CD4-positive, alpha-beta memory T cell (primary cell): ENCODE measurements at regions of chr6 and their contacts with region 1.

Region 1: GRCh38 chr6:135880066-135880972 is 28.8 kb downstream of the PDE7B start:
- DNase-seq: peak; percentile 66 to 77 (median 71)
- H3K4me3 ChIP-seq: peak overlapping the region; percentile 34 to 40
- H3K4me3 Mint-ChIP-seq: peak overlapping the region; percentile 77 to 96 (median 85)
- H3K27ac ChIP-seq: peak overlapping the region; percentile 65
- H3K27ac Mint-ChIP-seq: peak overlapping the region; percentile 83 to 98 (median 97)
- H3K4me1 ChIP-seq: peaks cover 35% of the 10 kb centered on the region
- H3K4me1 Mint-ChIP-seq: peaks cover 22 to 46% (median 33%) of the 10 kb centered on the region in 4 donors
- H3K27me3 ChIP-seq: no peaks in the 10 kb centered on the region
- H3K27me3 Mint-ChIP-seq: no peaks in the 10 kb centered on the region

Region 2: DNA sequence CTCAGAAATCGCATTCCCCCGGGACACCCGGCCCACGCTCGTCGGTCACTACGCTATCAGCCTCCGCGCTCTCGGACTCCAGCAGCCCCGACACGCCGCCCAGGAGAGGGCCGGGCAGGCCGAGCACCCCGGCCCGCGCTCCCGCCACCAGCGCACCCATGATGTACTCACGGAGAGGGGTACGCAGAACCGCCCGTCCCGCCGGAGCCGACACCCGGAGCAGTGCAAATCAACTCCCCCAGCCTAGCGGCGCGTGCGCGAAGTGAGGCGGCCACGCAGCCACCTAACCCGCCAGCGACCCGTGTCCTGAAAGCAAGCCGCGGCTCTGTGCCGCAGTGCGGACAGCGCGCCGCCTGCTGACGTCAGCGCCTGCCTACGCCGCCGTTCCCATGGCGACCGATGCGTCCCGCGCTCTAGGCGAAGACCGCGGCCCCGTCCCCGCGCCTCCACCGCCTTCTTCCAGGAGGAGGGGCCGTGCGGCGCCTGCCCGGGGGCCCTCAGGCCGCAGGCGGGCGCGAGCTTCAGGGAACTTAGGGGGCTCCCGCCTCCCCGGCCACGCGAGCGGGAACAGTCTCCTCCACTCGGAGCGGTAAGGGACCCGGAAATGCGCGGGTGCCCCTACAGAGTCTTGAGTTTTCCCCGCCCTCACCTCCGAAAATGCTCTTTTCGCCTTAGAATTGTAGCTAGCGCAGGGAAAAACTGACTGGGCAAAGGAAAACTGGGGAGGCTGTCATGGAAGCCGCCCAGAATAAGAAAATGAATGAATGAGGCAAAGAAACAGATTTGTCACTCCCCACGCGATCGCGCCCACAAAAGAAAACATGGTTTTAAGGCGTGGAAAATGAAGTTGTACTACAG is 382.7 kb before region 1 on chr6 and contains the start of gene AHI1:
- CTCF ChIA-PET with region 1: no interaction called
- POLR2A ChIA-PET with region 1: interaction called, 5 read pairs
- intact Hi-C with region 1: loop called (anchors 2 kb)
- DNase-seq: peak; percentile 86 to 92 (median 89)
- H3K4me3 ChIP-seq: peak within 1 kb of the TSS; percentile 32 to 97
- H3K4me3 Mint-ChIP-seq: peak within 1 kb of the TSS in 3 of 8 donors; percentile 29 to 95 (median 59)
- H3K27ac ChIP-seq: peak within 1 kb of the TSS; percentile 87
- H3K27ac Mint-ChIP-seq: peak within 1 kb of the TSS in 3 of 7 donors; percentile 21 to 69 (median 28)
- H3K4me1 ChIP-seq: peaks cover 15% of the 10 kb centered on the region
- H3K4me1 Mint-ChIP-seq: peaks cover 5 to 9% (median 6%) of the 10 kb centered on the region in 4 donors
- H3K27me3 ChIP-seq: no peaks in the 10 kb centered on the region
- H3K27me3 Mint-ChIP-seq: no peaks in the 10 kb centered on the region
- total RNA-seq, gene AHI1: 12.2 to 12.8 TPM

Region 3: GRCh38 chr6:135851442-135852271 is 28.7 kb before region 1 on chr6 and contains the start of gene PDE7B:
- CTCF ChIA-PET with region 1: interaction called, 3 read pairs
- POLR2A ChIA-PET with region 1: interaction called, 8 read pairs
- intact Hi-C with region 1: loop called (anchors 2 kb)
- DNase-seq: peak; percentile 12 to 46 (median 23)
- H3K4me3 ChIP-seq: no peak within 1 kb of the TSS
- H3K4me3 Mint-ChIP-seq: peak within 1 kb of the TSS; percentile 68 to 85 (median 78)
- H3K27ac ChIP-seq: no peak within 1 kb of the TSS
- H3K27ac Mint-ChIP-seq: peak within 1 kb of the TSS in 6 of 7 donors; percentile 44 to 77 (median 63)
- H3K4me1 ChIP-seq: peaks cover 16% of the 10 kb centered on the region
- H3K4me1 Mint-ChIP-seq: peaks cover 5 to 7% (median 6%) of the 10 kb centered on the region in 4 donors
- H3K27me3 ChIP-seq: no peaks in the 10 kb centered on the region
- H3K27me3 Mint-ChIP-seq: peaks cover 0 to 1% of the 10 kb centered on the region in 2 donors
- total RNA-seq, gene PDE7B: 0.49 to 0.94 TPM